ENCODE measurements at regions of chr6 and their contacts with region 1.

Region 1: GRCh38 chr6:27608916-27609883 is 136.3 kb upstream of the ZNF184 start:
- DNase-seq: peak; percentile 42
- ATAC-seq: no peak
- H3K4me3 ChIP-seq: no peak overlapping the region
- H3K4me3 Mint-ChIP-seq: no peak overlapping the region
- H3K27ac ChIP-seq: no peak overlapping the region
- H3K27ac Mint-ChIP-seq: no peak overlapping the region
- H3K4me1 ChIP-seq: peaks cover 0 to 6% of the 10 kb centered on the region in 2 donors
- H3K4me1 Mint-ChIP-seq: peaks cover 9% of the 10 kb centered on the region
- H3K27me3 ChIP-seq: peaks cover 0 to 32% (median 21%) of the 10 kb centered on the region in 4 experiments
- H3K27me3 Mint-ChIP-seq: peaks cover 50% of the 10 kb centered on the region
- CTCF ChIP-seq: peak; percentile 53

Region 2: GRCh38 chr6:27312146-27312949 is 296.9 kb before region 1 on chr6 and contains the start of gene POM121L2:
- CTCF ChIA-PET with region 1: interaction called, 12 read pairs
- POLR2A ChIA-PET with region 1: no interaction called
- intact Hi-C with region 1: loop called (anchors 2 kb)
- DNase-seq: peak; percentile 82
- ATAC-seq: peak; percentile 60
- H3K4me3 ChIP-seq: peak within 1 kb of the TSS; percentile 5 to 69 (median 62)
- H3K4me3 Mint-ChIP-seq: peak within 1 kb of the TSS; percentile 88
- H3K27ac ChIP-seq: no peak within 1 kb of the TSS
- H3K27ac Mint-ChIP-seq: no peak within 1 kb of the TSS
- H3K4me1 ChIP-seq: peaks cover 12 to 13% of the 10 kb centered on the region in 2 donors
- H3K4me1 Mint-ChIP-seq: peaks cover 13% of the 10 kb centered on the region
- H3K27me3 ChIP-seq: peaks cover 0 to 56% (median 38%) of the 10 kb centered on the region in 4 experiments
- H3K27me3 Mint-ChIP-seq: peaks cover 70% of the 10 kb centered on the region
- CTCF ChIP-seq: peak; percentile 82
- total RNA-seq, gene POM121L2: not detected in 2 replicates

Region 3: DNA sequence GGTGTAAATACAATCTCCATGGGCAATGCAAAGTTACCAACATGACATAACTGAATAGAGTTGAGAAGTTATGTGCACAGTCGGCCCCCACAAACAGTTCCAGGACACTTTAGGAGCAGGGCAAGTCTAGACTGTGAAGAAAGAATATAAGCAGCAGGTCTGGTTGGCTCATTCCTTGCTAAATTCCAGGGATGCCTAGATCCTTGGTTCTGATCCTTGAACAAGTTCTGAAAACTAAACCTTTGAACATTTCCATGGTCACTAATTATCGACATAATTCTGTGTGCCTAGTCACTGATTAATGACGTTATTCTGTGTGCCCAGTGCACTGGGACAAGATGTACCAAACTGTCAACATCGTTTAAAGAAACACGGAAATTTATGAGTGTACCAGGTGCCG is 148.5 kb before region 1 on chr6:
- CTCF ChIA-PET with region 1: no interaction called
- POLR2A ChIA-PET with region 1: no interaction called
- intact Hi-C with region 1: no loop called
- DNase-seq: no peak
- ATAC-seq: no peak
- H3K4me3 ChIP-seq: no peak overlapping the region
- H3K4me3 Mint-ChIP-seq: no peak overlapping the region
- H3K27ac ChIP-seq: no peak overlapping the region
- H3K27ac Mint-ChIP-seq: no peak overlapping the region
- H3K4me1 ChIP-seq: no peaks in the 10 kb centered on the region
- H3K4me1 Mint-ChIP-seq: peaks cover 3% of the 10 kb centered on the region
- H3K27me3 ChIP-seq: no peaks in the 10 kb centered on the region
- H3K27me3 Mint-ChIP-seq: no peaks in the 10 kb centered on the region
- CTCF ChIP-seq: no peak

Region 4: GRCh38 chr6:27889275-27889627 is 280.1 kb after region 1 on chr6:
- CTCF ChIA-PET with region 1: no interaction called
- POLR2A ChIA-PET with region 1: no interaction called
- intact Hi-C with region 1: no loop called
- DNase-seq: no peak
- ATAC-seq: no peak
- H3K4me3 ChIP-seq: no peak overlapping the region
- H3K4me3 Mint-ChIP-seq: no peak overlapping the region
- H3K27ac ChIP-seq: no peak overlapping the region
- H3K27ac Mint-ChIP-seq: peak overlapping the region; percentile 62
- H3K4me1 ChIP-seq: peaks cover 18 to 38% of the 10 kb centered on the region in 2 donors
- H3K4me1 Mint-ChIP-seq: peaks cover 36% of the 10 kb centered on the region
- H3K27me3 ChIP-seq: no peaks in the 10 kb centered on the region
- H3K27me3 Mint-ChIP-seq: no peaks in the 10 kb centered on the region
- CTCF ChIP-seq: no peak

Measured in B cell (primary cell).